Activated B cell treated with CpG ODN at 0.5 μM for 24 hours (primary cell): ENCODE measurements at regions of chr3 and their contacts with region 1.

Region 1: DNA sequence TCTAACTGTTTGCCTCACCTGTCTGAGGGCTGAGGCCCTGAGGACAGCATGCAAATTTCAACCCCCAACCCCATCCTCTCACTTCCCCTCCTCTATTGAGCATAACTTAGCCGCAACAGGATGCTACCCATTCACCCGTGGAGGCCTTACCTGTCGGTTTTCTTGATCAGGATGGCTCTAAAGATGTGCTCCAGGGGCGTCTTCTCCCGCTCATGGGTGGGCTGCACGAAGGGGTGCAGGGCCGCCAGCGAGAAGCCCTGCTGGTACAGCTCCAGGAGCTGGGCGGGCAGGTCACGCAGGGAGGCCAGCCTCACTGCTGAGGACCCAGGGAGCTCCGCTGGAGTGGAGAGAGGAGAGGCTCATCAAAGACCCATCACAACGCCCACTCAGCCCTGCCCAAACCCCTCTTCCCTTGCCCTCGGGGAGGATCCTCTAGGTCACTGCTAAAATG is 79.8 kb downstream of the RFTN1 start:
- DNase-seq: peak; percentile 58
- ATAC-seq: peak; percentile 63
- H3K4me3 Mint-ChIP-seq: peak overlapping the region; percentile 68
- H3K27ac Mint-ChIP-seq: peak overlapping the region; percentile 74
- H3K4me1 Mint-ChIP-seq: peaks cover 63% of the 10 kb centered on the region
- H3K27me3 Mint-ChIP-seq: no peaks in the 10 kb centered on the region
- CTCF ChIP-seq: no peak

Region 2: DNA sequence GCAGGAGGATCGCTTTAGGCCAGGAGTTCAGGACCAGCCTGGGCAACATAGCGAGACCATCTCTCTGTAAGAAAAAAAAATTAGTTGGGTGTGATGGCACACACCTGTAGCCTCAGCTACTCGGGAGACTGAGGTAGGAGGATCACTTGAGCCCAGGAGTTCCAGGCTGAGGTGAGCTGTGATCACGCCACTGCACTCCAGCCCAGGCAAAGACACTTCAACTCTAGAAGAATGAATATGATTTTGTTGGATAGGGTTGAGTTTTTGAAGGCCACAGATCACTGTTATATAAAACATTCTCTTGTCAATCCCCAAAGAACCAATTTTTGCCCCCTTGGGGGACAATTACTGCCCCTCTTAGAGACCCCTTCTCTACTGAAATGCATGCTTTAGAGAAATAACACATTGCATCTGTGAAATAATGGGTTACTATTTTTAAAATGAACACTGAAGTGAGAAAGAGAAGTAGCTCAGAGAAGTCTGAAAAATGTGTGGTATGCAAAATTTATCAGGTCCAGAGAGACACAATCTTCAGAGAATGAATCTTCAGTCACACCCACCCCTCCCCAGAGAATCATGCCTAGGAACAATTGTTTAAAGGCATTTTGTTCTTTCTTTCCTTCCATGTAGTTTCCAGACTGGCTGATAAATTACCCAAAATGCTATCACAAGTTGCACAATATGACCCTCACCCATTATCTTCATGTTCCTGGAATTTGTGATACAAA is 1049.1 kb before region 1 on chr3:
- CTCF ChIA-PET with region 1: no interaction called
- POLR2A ChIA-PET with region 1: no interaction called
- intact Hi-C with region 1: no loop called
- DNase-seq: no peak
- ATAC-seq: peak; percentile 90
- H3K4me3 Mint-ChIP-seq: peak overlapping the region; percentile 71
- H3K27ac Mint-ChIP-seq: peak overlapping the region; percentile 95
- H3K4me1 Mint-ChIP-seq: peaks cover 79% of the 10 kb centered on the region
- H3K27me3 Mint-ChIP-seq: no peaks in the 10 kb centered on the region
- CTCF ChIP-seq: no peak

Region 3: DNA sequence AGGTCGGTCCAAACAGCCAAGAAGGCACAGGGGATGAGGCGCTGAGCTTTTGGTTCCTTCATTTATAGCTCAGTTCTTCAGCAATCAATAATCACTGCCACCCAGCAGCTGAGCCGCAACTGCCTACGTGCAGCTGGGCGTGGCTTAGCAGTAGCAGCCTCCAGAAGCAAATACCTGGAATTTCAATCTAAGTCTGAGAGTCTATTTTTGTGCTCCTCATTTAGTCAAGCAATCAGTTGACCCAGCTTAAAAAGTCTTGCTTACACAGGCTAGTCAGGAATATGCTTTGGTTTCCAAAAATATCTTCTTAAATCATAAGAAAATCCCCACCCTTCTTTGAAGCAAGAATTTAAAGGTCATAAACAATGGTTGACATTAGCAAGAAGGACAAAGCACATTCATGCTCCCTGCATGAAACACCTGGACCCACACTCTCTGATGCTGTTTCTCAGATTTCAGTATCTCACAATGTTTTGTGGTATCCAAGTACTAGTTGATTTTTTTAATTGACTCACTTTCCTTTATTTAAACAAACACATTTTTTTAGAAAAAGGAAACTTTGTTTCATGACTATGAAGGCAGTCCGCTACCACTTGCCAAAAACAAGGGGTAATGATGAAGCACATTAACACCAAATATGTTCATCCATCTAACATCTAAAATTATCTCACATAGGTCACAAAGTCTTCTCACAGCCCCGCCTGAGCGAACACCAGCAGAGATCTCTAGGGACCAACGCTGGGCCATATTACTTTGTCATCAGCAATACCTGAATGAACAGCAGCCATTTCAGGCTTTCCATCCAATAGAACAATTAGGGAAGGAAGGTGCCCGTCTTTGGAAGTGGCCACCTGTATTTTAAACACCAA is 62.6 kb before region 1 on chr3:
- CTCF ChIA-PET with region 1: no interaction called
- POLR2A ChIA-PET with region 1: interaction called, 36 read pairs
- intact Hi-C with region 1: loop called (anchors 1 kb)
- DNase-seq: peak; percentile 32
- ATAC-seq: peak; percentile 59
- H3K4me3 Mint-ChIP-seq: peak overlapping the region; percentile 75
- H3K27ac Mint-ChIP-seq: peak overlapping the region; percentile 93
- H3K4me1 Mint-ChIP-seq: peaks cover 95% of the 10 kb centered on the region
- H3K27me3 Mint-ChIP-seq: no peaks in the 10 kb centered on the region
- CTCF ChIP-seq: no peak

Region 4: GRCh38 chr3:16415911-16416476 is 17.7 kb before region 1 on chr3:
- CTCF ChIA-PET with region 1: no interaction called
- POLR2A ChIA-PET with region 1: interaction called, 7 read pairs
- intact Hi-C with region 1: loop called (anchors 2 kb)
- DNase-seq: no peak
- ATAC-seq: no peak
- H3K4me3 Mint-ChIP-seq: no peak overlapping the region
- H3K27ac Mint-ChIP-seq: no peak overlapping the region
- H3K4me1 Mint-ChIP-seq: peaks cover 79% of the 10 kb centered on the region
- H3K27me3 Mint-ChIP-seq: no peaks in the 10 kb centered on the region
- CTCF ChIP-seq: no peak

Region 5: DNA sequence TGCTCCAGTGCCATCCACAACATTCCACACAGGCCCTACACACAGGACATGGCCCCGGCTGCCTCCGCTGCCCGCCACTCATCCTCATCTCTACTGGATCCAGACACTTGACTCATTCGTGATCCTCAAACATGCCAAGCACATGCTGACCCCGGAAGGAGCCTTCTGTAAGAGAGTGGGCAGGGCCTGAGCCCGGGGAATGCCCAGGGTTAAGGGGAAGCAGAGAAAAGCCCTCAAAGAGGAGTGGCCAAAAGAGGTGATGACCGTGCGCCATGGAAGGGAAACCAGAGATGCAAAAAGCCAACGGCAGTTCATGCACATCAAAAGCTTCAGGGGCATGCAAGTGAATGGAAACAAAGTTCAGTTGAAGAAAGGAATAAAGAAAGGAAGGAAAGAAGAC is 33.7 kb after region 1 on chr3:
- CTCF ChIA-PET with region 1: no interaction called
- POLR2A ChIA-PET with region 1: interaction called, 3 read pairs
- intact Hi-C with region 1: loop called (anchors 1 kb)
- DNase-seq: peak; percentile 51
- ATAC-seq: peak; percentile 99
- H3K4me3 Mint-ChIP-seq: peak overlapping the region; percentile 52
- H3K27ac Mint-ChIP-seq: peak overlapping the region; percentile 55
- H3K4me1 Mint-ChIP-seq: peaks cover 69% of the 10 kb centered on the region
- H3K27me3 Mint-ChIP-seq: no peaks in the 10 kb centered on the region
- CTCF ChIP-seq: no peak

Region 6: DNA sequence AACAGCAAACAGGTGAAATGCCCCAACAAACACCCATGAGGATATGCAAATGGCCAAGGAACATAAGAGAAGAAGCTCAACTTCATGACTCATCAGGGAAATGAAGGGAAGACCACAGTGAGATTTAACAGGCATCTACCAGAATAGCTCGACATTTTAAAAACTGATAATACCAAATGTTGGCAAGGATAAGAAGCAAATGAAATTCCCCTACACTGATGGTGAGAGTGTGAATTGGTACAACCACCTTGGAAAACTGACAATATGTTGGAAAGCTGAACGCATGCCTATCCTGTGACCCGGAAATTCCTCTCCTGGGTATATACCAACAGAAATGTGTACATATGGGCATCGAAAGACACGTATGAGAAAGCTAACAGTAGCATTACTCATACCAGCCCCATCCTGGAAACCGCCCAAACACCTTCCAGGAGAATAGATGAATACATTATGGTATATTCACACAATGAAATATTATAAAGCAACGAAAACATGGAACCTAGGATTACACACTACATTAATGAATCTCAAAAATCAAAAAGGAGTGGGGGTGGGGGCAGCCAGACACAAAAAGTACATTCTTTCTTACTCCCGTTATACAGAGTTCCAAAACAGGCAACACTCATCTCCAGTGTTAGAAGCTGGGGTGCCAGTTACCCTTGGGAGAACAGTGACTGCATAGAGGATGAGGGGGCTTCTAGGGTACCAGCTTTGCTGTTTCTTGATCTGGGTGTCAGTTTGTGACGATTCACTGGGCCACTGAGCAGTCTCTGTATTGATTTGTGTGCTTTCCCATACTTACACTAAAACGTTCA is 62.9 kb after region 1 on chr3:
- CTCF ChIA-PET with region 1: no interaction called
- POLR2A ChIA-PET with region 1: interaction called, 16 read pairs
- intact Hi-C with region 1: no loop called
- DNase-seq: no peak
- ATAC-seq: peak; percentile 79
- H3K4me3 Mint-ChIP-seq: peak overlapping the region; percentile 59
- H3K27ac Mint-ChIP-seq: peak overlapping the region; percentile 38
- H3K4me1 Mint-ChIP-seq: peaks cover 66% of the 10 kb centered on the region
- H3K27me3 Mint-ChIP-seq: no peaks in the 10 kb centered on the region
- CTCF ChIP-seq: no peak

Region 7: DNA sequence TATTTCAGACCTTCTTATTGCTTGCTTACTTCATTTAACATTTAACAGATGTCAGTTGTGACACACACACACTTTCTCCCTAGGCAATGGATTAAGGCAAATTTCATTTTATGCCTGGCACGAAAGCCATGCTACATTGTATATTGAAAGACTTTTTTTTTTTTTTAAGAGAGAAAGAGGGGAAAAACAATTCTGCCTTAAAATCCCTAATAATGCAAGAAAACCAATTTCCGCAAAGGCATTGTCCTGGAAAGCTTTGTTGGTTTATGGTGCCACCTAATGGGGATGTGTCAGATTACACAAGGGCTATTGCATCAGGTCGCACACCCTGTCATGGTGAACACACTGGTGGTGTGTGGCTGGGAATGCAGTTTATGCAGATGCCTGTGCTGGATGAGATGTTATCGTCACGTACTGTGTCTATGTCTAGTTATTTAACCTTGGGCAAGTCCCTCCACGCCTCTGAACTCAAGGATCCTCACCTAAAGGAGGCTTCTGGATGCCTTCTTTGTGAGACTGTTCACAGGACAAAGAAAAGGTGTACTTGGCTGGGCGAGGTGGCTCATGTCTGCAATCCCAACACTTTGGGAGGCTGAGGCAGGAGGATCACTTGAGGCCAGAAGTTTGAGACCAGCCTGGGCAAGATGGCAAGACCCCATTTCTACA is 117.1 kb after region 1 on chr3:
- CTCF ChIA-PET with region 1: no interaction called
- POLR2A ChIA-PET with region 1: no interaction called
- intact Hi-C with region 1: loop called (anchors 1 kb)
- DNase-seq: peak; percentile 32
- ATAC-seq: peak; percentile 98
- H3K4me3 Mint-ChIP-seq: no peak overlapping the region
- H3K27ac Mint-ChIP-seq: peak overlapping the region; percentile 43
- H3K4me1 Mint-ChIP-seq: peaks cover 7% of the 10 kb centered on the region
- H3K27me3 Mint-ChIP-seq: peaks cover 6% of the 10 kb centered on the region
- CTCF ChIP-seq: no peak